OCI-LY7 (cell line): ENCODE measurements at regions of chr3 and their contacts with region 1.

Region 1: GRCh38 chr3:100334488-100335351 is at the start of gene NIT2:
- DNase-seq: peak; percentile 91
- H3K4me3 ChIP-seq: peak within 1 kb of the TSS; percentile 85
- H3K27ac ChIP-seq: peak within 1 kb of the TSS; percentile 31
- H3K4me1 ChIP-seq: peaks cover 9% of the 10 kb centered on the region
- CTCF ChIP-seq: no peak
- total RNA-seq, gene NIT2: 25.7 and 34.6 TPM in 2 replicates

Region 2: GRCh38 chr3:100348727-100349126 is 14.0 kb after region 1 on chr3:
- CTCF ChIA-PET with region 1: interaction called, 3 read pairs
- POLR2A ChIA-PET with region 1: interaction called, 14 read pairs
- intact Hi-C with region 1: no loop called
- DNase-seq: no peak
- H3K4me3 ChIP-seq: no peak overlapping the region
- H3K27ac ChIP-seq: no peak overlapping the region
- H3K4me1 ChIP-seq: no peaks in the 10 kb centered on the region
- CTCF ChIP-seq: no peak

Region 3: DNA sequence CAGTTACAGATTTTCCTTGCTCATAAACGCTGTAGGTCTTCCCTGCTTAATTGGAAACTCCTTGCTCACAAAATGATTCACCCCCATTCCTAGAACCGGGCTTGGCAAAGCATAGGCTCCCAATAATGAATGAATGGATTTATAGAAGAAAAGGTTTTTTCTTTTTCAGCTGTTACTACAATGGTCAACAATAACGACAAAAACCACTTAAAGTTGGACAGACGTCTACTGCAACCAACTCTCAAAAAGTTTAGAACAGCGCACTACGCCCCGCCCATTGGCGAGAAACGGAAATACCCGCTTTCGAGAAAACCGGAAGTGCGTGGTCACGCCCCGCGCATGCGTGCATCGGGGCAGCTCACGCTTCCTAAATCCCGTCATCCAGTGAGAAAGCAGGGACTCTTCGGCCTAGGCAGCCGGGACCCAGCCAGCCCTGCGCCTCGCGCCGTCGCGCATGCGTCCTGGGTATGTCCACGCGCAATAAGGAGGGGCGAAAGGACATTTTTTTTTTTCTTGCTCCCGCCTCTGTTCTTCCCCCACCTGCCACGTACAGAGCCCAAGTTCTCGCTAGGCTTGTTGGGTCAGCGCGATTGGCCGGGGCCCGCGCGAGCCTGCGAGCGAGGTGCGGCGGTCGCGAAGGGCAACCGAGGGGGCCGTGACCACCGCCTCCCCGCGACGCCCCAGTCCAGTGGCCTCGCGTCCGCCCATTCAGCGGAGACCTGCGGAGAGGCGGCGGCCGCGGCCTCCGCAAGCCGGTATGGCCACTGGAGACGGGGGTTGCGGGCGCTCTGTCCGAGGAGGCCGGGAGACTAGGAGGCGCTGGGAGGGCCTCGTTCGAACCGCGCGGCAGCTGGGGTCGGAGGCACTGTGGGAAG is 374.5 kb after region 1 on chr3 and contains the start of gene TFG:
- CTCF ChIA-PET with region 1: no interaction called
- POLR2A ChIA-PET with region 1: interaction called, 5 read pairs
- intact Hi-C with region 1: loop called (anchors 10 kb)
- DNase-seq: peak; percentile 98
- H3K4me3 ChIP-seq: peak within 1 kb of the TSS; percentile 91
- H3K27ac ChIP-seq: peak within 1 kb of the TSS; percentile 60
- H3K4me1 ChIP-seq: peaks cover 14% of the 10 kb centered on the region
- CTCF ChIP-seq: no peak
- total RNA-seq, gene TFG: 28.1 and 29.4 TPM in 2 replicates